Heart right ventricle (tissue), 16 donors: ENCODE measurements at regions of chr1 and their contacts with region 1.

Region 1: DNA sequence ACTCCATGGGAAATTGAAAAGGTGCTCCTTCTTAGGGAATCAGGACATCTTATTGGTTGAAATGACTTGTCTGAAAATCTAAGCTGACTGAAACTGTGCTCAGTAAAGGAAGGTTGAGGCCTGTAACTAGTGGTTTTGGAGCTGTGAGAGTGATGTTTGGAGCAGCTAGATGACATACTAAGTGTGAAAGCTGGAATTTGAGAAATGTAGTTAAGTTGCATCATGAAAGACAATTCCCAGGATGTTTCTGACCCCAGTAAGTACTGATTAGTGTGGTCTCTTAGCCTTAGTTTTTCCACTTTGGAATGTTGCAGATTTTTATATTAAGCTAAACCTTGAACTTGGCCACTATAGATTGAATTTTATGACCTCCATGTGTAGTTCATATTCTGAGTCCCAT is 154.9 kb downstream of the PAPPA2 start:
- DNase-seq: no peak
- ATAC-seq: no peak
- H3K4me3 ChIP-seq: no peak overlapping the region
- H3K27ac ChIP-seq: no peak overlapping the region
- H3K4me1 ChIP-seq: no peaks in the 10 kb centered on the region
- H3K27me3 ChIP-seq: no peaks in the 10 kb centered on the region
- CTCF ChIP-seq: no peak

Region 2: GRCh38 chr1:176601348-176601747 is 16.5 kb before region 1 on chr1:
- intact Hi-C with region 1: loop called in 1 of 10 experiments (anchors 2 kb)
- DNase-seq: no peak
- ATAC-seq: peak in 2 of 8 donors; percentile 20 to 61
- H3K4me3 ChIP-seq: no peak overlapping the region
- H3K27ac ChIP-seq: no peak overlapping the region
- H3K4me1 ChIP-seq: peaks cover 0 to 9% (median 0%) of the 10 kb centered on the region in 9 donors
- H3K27me3 ChIP-seq: no peaks in the 10 kb centered on the region
- CTCF ChIP-seq: no peak